AG04449 (cell line): ENCODE measurements at regions of chr17 and their contacts with region 1.

Region 1: DNA sequence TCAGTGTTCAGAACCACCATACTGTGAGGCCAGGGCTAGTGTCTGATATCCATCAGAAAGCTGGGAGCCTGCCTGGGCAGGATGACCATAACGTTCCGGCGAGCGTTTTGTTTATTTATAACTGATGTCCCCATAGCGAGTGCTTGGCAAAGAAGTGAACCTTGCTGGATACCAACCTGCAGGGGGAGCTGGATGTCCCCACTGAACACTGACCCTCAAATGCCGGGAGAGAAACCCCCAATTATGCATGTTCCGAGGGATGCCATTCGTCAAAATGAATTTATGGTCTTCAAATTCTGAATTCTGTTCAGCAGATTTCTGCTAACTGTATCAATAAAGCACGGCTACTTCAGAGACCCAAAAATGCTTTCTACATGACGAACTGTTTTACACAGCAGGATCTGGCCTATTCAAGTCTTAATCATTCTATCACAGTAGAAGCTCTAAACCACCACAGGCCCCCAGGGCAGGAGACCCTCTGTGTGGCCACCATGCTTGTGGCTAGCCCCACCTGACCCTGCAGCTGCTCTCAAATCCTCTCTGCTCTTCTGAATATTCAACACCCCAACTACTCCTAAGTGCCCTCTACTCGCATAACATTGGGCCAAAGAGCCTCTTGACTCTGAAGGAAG is 15.2 kb downstream of the MED24 start:
- DNase-seq: peak; percentile 42
- H3K4me3 ChIP-seq: no peak overlapping the region
- CTCF ChIP-seq: peak; percentile 79

Region 2: DNA sequence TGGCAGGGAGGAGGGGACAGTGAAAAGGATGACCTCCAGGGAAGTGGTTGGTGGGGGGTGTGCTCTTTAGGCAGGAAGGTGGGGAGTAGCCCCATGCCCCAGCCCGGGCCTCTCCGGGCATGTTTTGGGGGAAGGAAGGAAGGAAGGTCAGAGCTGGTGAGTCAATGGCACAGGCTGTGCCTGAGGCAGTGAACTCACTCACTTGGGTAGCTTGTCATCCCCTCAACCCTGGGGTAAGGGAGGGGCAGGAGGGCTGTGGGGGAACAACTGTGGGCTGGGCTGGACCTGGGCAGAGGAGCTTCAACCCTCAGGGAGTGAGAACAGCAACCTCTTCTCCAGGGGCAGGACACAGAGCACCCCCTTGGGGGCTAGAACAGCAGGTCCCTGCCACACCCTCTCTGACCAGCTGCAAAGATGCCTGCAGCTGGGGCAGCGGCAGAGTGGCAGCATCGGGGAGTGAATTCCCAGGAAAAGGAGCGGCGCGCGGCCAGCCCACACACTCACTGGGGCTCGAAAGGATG is 17.5 kb before region 1 on chr17:
- CTCF ChIA-PET with region 1: interaction called, 325 read pairs
- POLR2A ChIA-PET with region 1: no interaction called
- DNase-seq: no peak
- H3K4me3 ChIP-seq: no peak overlapping the region
- CTCF ChIP-seq: no peak

Region 3: GRCh38 chr17:40062329-40063186 is 23.6 kb after region 1 on chr17 and contains the start of gene THRA:
- CTCF ChIA-PET with region 1: interaction called, 111 read pairs
- POLR2A ChIA-PET with region 1: no interaction called
- DNase-seq: no peak
- H3K4me3 ChIP-seq: peak within 1 kb of the TSS; percentile 90
- CTCF ChIP-seq: no peak